Activated T-helper 2 cell treated with anti-CD3 and anti-CD28 coated beads, Interferon-gamma antibody, Interleukin-2, Interleukin-4, amounts not matched to agents 10 μg/mL and 5 μg/mL and 100 μg/mL, durations not matched to agents 14 hours and 24 hours and 36 hours (primary cell): ENCODE measurements at regions of chr12 and their contacts with region 1.

Region 1: DNA sequence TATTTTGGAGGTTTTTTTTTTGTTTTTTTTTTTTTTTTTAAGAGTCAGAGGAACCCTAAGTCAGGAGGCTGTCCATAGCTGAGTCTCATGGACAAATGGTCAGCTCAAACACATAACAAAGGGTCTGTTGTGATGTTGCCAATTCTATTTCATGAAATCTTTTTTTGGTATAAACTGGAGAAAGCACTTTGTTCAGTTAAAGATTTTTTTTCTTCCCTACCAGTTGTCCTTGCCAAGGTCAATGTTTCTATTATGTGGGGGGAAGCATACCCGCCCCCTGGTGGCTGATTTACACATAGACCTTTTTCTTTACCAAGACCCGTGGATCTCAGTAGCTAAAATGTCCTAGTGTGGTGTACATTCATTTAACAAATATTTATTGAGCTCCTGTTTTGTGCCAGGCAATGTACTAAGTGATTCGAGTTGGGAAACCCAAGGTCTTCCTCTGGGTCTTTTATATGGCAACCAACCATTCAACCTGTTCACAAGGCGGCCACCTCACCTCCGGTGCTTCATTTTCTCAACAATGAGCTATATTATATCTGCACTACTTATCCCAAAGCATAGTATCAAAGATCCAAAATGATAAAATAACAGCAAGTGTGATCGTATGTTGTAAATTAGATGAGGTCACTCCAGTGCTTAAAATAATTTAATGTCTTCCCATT is 214.5 kb downstream of the PAH start:
- DNase-seq: peak; percentile 16
- H3K4me3 Mint-ChIP-seq: no peak overlapping the region
- H3K27ac Mint-ChIP-seq: no peak overlapping the region
- H3K4me1 Mint-ChIP-seq: no peaks in the 10 kb centered on the region
- H3K27me3 Mint-ChIP-seq: peaks cover 25% of the 10 kb centered on the region

Region 2: GRCh38 chr12:101919447-101919846 is 783.1 kb before region 1 on chr12:
- intact Hi-C with region 1: loop called (anchors 2 kb)
- DNase-seq: no peak
- H3K4me3 Mint-ChIP-seq: no peak overlapping the region
- H3K27ac Mint-ChIP-seq: no peak overlapping the region
- H3K4me1 Mint-ChIP-seq: peaks cover 5% of the 10 kb centered on the region
- H3K27me3 Mint-ChIP-seq: no peaks in the 10 kb centered on the region

Region 3: GRCh38 chr12:102095675-102096263 is 606.8 kb before region 1 on chr12:
- intact Hi-C with region 1: loop called (anchors 1 kb)
- DNase-seq: no peak
- H3K4me3 Mint-ChIP-seq: no peak overlapping the region
- H3K27ac Mint-ChIP-seq: no peak overlapping the region
- H3K4me1 Mint-ChIP-seq: peaks cover 18% of the 10 kb centered on the region
- H3K27me3 Mint-ChIP-seq: no peaks in the 10 kb centered on the region

Region 4: DNA sequence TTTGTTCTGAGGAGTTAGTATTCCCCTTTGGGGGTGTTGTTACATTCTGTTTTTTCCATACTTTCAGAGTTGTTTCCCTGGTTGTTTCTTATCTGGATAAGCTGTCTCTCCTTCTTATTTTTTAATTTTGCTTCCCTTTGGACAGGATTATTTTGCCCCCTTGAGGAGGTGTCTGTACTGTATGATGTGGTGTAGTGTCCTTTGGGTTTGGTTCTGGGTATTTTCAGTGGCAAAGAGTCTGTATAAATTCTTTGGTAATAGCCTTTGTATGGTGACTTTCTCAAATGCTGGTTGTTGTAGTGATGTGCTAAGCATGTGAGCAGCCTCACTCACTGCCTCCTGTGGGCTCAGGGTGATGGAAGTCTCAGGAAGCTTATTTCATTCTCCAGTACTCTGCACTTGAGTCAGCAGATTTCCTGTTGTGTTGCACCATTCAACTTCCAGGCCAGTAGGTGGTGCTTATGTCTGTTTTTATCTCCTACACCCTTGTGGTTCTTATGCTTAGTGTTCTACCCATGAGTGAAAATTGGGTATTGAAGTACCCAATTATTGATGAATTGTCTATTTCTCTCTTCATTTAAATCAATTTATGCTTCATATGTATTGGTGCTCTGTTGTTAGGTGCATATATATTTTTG is 401.6 kb before region 1 on chr12:
- intact Hi-C with region 1: loop called (anchors 1 kb)
- DNase-seq: peak; percentile 12
- H3K4me3 Mint-ChIP-seq: no peak overlapping the region
- H3K27ac Mint-ChIP-seq: no peak overlapping the region
- H3K4me1 Mint-ChIP-seq: peaks cover 31% of the 10 kb centered on the region
- H3K27me3 Mint-ChIP-seq: peaks cover 18% of the 10 kb centered on the region

Region 5: DNA sequence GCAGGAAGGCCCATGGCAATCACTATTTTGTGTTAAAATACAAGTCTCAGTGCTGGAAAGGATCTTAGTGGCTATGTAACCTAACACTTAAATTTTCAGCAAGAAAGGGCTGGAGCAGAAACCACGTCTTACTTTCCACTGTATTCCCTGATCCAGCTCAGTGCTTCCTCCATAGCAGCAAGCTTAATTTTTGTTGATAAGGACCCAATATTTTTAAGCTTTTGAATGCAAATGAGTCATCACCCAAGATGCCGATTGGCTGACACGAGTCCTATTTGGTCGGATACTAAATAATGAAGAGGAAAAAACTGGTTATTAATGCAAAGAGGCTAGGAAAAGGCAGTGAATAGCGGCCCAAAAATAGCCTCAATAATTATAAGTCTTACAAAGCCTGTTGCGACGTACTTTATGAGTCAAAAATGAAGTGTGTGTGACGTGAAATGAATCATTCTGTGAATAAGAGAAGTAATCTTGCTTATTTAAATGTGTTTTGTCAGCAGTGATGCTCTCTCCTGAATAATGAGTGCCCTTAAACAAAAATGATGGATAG is 175.3 kb before region 1 on chr12:
- intact Hi-C with region 1: no loop called
- DNase-seq: no peak
- H3K4me3 Mint-ChIP-seq: no peak overlapping the region
- H3K27ac Mint-ChIP-seq: no peak overlapping the region
- H3K4me1 Mint-ChIP-seq: no peaks in the 10 kb centered on the region
- H3K27me3 Mint-ChIP-seq: peaks cover 3% of the 10 kb centered on the region

Region 6: GRCh38 chr12:102793921-102794320 is 91.3 kb after region 1 on chr12:
- intact Hi-C with region 1: no loop called
- DNase-seq: no peak
- H3K4me3 Mint-ChIP-seq: no peak overlapping the region
- H3K27ac Mint-ChIP-seq: no peak overlapping the region
- H3K4me1 Mint-ChIP-seq: no peaks in the 10 kb centered on the region
- H3K27me3 Mint-ChIP-seq: peaks cover 2% of the 10 kb centered on the region